ENCODE measurements at regions of chr11 and their contacts with region 1.

Region 1: GRCh38 chr11:19553683-19554333 is 158.8 kb upstream of the NAV2 start:
- DNase-seq: peak; percentile 68 to 83 (median 75)
- ATAC-seq: peak; percentile 81
- H3K4me3 ChIP-seq: no peak overlapping the region
- H3K27ac ChIP-seq: no peak overlapping the region
- H3K4me1 ChIP-seq: peaks cover 0 to 9% of the 10 kb centered on the region in 2 donors
- H3K27me3 ChIP-seq: peaks cover 0 to 5% of the 10 kb centered on the region in 2 donors
- CTCF ChIP-seq: peak; percentile 85

Region 2: DNA sequence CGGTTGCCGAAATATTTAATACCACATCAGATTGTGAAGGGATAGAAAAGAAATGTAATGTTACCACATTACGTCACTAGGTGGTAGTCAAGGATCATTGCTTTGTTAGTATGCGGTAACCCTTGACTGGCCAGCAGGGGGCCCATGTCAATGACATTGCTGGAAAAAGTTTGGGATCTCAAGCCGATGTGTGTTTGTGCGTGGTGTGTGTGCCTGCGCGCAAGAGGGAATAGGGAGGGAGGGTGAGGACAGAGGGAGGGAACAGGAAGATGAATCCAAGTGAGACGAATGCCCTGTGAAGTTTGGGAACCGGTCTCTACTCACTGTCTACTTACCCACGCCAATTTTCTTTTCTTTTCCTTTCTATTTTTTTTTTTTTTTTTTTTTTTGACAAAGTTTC is 482.6 kb before region 1 on chr11:
- intact Hi-C with region 1: loop called in 1 of 2 experiments (anchors 10 kb)
- DNase-seq: peak; percentile 67 to 86 (median 73)
- ATAC-seq: peak; percentile 99
- H3K4me3 ChIP-seq: no peak overlapping the region
- H3K27ac ChIP-seq: no peak overlapping the region
- H3K4me1 ChIP-seq: no peaks in the 10 kb centered on the region
- H3K27me3 ChIP-seq: peaks cover 0 to 4% of the 10 kb centered on the region in 2 donors
- CTCF ChIP-seq: peak; percentile 77 to 85

Region 3: GRCh38 chr11:19311308-19312030 is 242.3 kb before region 1 on chr11:
- intact Hi-C with region 1: loop called in 1 of 2 experiments (anchors 5 kb)
- DNase-seq: peak in 2 of 4 donors; percentile 47 to 64
- ATAC-seq: peak; percentile 96
- H3K4me3 ChIP-seq: no peak overlapping the region
- H3K27ac ChIP-seq: no peak overlapping the region
- H3K4me1 ChIP-seq: peaks cover 0 to 3% of the 10 kb centered on the region in 2 donors
- H3K27me3 ChIP-seq: no peaks in the 10 kb centered on the region
- CTCF ChIP-seq: peak; percentile 76 to 77

Region 4: GRCh38 chr11:19326499-19326898 is 227.3 kb before region 1 on chr11:
- intact Hi-C with region 1: loop called in 1 of 2 experiments (anchors 5 kb)
- DNase-seq: no peak
- ATAC-seq: no peak
- H3K4me3 ChIP-seq: no peak overlapping the region
- H3K27ac ChIP-seq: no peak overlapping the region
- H3K4me1 ChIP-seq: no peaks in the 10 kb centered on the region
- H3K27me3 ChIP-seq: no peaks in the 10 kb centered on the region
- CTCF ChIP-seq: no peak

Region 5: DNA sequence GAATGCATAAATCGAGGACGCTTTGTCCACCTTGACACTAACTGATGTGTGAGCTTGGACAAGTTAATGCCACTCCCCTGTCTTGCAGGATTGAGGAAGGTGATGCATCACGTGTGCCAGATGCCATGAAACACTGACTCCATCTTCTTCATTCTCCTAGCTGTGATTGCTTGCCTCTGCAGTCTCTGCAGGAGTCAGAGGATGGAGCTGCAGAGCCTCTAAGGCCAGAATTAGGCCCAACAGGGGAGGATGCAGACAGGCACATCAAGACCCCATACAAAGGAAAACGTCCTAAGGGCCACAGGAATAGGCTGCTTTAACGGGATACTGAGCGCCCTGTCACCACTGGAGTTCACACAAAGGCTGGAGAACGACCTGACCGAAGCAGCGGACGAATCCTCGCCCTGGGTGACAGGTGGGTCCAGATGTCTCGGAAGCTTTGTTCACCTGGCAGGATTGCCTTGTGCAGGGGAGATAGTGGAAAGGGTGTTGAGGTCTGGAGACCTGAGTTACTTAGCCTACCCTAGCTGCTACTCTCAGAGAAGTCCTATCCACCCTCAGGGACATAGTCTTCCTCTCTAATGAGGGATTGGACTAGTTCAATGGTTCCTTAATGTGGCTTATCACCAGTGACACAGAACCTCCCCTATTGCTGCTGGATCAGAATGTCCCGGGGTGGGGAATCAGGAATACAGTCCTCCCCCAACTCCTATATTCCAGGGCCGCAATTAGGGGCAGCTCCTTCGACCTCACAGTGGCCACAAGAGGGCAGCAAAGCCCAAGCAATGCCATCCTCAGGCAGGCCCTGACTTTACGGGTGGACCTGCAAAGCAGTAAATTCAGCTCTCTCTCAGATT is 574.1 kb after region 1 on chr11:
- intact Hi-C with region 1: loop called in 1 of 2 experiments (anchors 5 kb)
- DNase-seq: peak in 3 of 4 donors; percentile 60 to 79 (median 64)
- ATAC-seq: peak; percentile 85
- H3K4me3 ChIP-seq: no peak overlapping the region
- H3K27ac ChIP-seq: no peak overlapping the region
- H3K4me1 ChIP-seq: peaks cover 0 to 6% of the 10 kb centered on the region in 2 donors
- H3K27me3 ChIP-seq: peaks cover 0 to 16% of the 10 kb centered on the region in 2 donors
- CTCF ChIP-seq: peak; percentile 70 to 76